GM13977 (cell line): ENCODE measurements at regions of chr1 and their contacts with region 1.

Region 1: DNA sequence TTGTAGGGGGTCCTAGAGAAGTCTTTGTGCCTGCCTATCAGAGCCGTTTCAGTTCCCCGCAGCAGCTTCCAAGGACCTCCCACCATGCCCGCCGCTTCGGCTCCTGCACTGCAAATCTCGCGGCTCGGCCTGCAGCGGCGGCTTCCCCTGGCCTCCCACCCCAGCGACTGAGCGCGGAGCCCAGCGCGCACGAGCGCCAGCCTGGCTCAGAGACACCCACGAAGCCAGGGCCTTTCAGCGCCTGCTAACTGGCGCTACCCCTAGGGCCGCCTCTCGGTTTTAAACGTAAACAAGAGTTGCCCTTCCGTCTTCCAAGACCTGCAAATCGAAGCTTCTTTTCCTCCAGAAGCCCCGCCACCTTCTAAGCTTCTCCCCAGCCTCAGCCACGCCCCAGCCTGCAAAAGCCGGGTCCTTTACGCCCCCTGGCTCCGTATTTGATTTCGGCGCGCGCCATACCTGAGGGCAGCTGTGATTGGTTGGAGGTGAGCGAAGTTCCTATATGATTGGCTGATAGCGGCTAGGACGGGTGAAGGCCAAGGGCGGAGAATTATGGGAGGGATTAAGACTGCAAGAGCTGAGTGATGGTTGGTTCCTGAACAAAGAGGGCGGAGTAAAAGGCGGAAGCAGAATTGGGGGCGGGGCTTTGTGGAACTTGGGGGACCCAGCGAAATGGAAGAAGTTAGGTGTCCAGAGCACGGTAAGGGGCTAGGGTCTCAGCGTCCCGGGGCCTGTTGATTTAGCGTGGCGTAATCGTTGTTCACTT is at the start of gene TTF2:
- DNase-seq: peak; percentile 96
- CTCF ChIP-seq: peak; percentile 12

Region 2: GRCh38 chr1:116570358-116571200 is 489.3 kb before region 1 on chr1 and contains the start of gene CD58:
- in situ Hi-C with region 1: loop called (anchors 25 kb)
- DNase-seq: peak; percentile 92
- CTCF ChIP-seq: peak; percentile 82

Region 3: DNA sequence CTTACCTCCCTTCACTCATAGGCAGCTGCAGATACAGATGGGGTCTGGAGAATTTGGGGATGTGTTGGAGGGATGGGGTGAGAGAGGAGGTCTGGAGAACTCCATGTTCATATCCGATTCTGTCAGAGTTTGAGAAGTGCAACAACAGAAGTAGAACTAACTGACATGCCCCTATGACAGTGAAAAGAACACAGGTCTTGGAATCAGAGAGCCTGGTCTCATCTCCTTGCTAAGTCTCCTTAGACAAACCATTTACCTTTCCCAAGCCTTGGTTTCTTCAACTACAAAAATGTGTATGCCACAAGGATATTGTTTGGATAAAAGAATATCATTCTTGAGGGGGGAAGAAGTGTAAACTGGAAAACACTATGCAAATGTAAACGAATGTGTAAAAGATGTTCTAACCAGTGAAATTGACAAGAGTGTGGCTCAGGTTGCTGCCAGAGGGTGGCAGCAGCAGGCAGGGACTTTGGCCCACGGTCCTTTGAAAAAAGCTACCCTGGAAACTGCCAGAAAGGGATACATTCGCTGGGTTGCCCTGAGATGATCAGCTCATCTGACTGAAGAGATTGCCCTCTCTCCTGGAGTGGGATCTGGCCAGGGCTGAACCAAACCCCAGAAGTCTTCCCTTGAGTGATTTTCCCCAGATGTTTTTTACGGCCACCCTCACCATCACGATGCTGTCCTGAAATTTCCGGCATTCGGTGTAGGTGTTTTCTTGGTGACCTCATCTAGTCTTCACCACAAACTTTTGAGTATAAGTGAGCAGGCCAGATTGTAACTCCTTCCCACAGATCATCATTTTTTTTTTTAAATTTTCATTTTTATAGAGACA is 322.6 kb before region 1 on chr1:
- in situ Hi-C with region 1: loop called (anchors 10 kb)
- DNase-seq: peak; percentile 76
- CTCF ChIP-seq: peak; percentile 86

Region 4: GRCh38 chr1:116826818-116827606 is 232.8 kb before region 1 on chr1:
- in situ Hi-C with region 1: loop called (anchors 10 kb)
- DNase-seq: peak; percentile 81
- CTCF ChIP-seq: no peak

Region 5: GRCh38 chr1:116853670-116854402 is 206.0 kb before region 1 on chr1:
- in situ Hi-C with region 1: no loop called
- DNase-seq: peak; percentile 28
- CTCF ChIP-seq: no peak